ENCODE measurements at regions of chr10 and their contacts with region 1.

Region 1: GRCh38 chr10:117442944-117443685 is 67.9 kb upstream of the PDZD8 start:
- DNase-seq: peak; percentile 83
- ATAC-seq: peak; percentile 95
- H3K4me3 ChIP-seq: peak overlapping the region in 1 of 2 experiments; percentile 26; a peak in 2 of 4 replicates
- H3K27ac ChIP-seq: no peak overlapping the region
- H3K4me1 ChIP-seq: peaks cover 2 to 19% of the 10 kb centered on the region in 2 experiments; a peak in 2 of 4 replicates
- H3K27me3 ChIP-seq: no peaks in the 10 kb centered on the region; the same call in 1 of the 2 replicates
- CTCF ChIP-seq: peak; percentile 90 to 99 (median 99)
- POLR2A ChIP-seq: no peak
- RAD21 ChIP-seq: peak; percentile 89

Region 2: GRCh38 chr10:117226824-117227451 is 216.2 kb before region 1 on chr10:
- CTCF ChIA-PET with region 1: interaction called, 18 read pairs
- POLR2A ChIA-PET with region 1: no interaction called
- RAD21 ChIA-PET with region 1: no interaction called
- intact Hi-C with region 1: no loop called
- DNase-seq: peak; percentile 67
- ATAC-seq: peak; percentile 98
- H3K4me3 ChIP-seq: no peak overlapping the region
- H3K27ac ChIP-seq: no peak overlapping the region
- H3K4me1 ChIP-seq: peaks cover 0 to under 1% of the 10 kb centered on the region in 2 experiments; a peak in 1 of 4 replicates
- H3K27me3 ChIP-seq: peaks cover 28% of the 10 kb centered on the region; the same call in 1 of the 2 replicates
- CTCF ChIP-seq: peak; percentile 91 to 96 (median 91)
- POLR2A ChIP-seq: no peak
- RAD21 ChIP-seq: peak; percentile 91

Region 3: GRCh38 chr10:117353684-117354083 is 89.4 kb before region 1 on chr10:
- CTCF ChIA-PET with region 1: no interaction called
- POLR2A ChIA-PET with region 1: no interaction called
- RAD21 ChIA-PET with region 1: no interaction called
- intact Hi-C with region 1: no loop called
- DNase-seq: no peak
- ATAC-seq: no peak
- H3K4me3 ChIP-seq: no peak overlapping the region
- H3K27ac ChIP-seq: no peak overlapping the region
- H3K4me1 ChIP-seq: peaks cover 0 to 3% of the 10 kb centered on the region in 2 experiments; a peak in 1 of 4 replicates
- H3K27me3 ChIP-seq: no peaks in the 10 kb centered on the region
- CTCF ChIP-seq: no peak
- POLR2A ChIP-seq: no peak
- RAD21 ChIP-seq: no peak

Region 4: DNA sequence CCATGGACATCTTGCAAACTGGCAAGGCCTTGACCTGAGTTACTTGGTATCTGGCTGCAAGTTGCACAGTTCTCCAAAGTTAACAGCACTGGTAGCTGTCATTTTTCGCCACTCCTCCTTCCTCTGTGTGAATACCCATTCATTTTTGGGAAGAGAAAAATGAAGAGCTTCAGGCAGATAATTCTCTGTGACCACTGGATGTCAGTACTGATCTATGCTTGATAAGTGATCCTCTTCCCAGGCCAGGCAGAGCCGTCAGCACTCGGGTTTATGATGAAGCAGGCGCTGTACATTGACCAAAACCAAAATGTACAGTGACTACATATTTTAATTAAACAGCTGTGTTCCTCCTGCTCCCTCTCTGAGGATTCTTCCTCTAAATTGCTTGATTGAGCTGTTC is 12.0 kb before region 1 on chr10:
- CTCF ChIA-PET with region 1: interaction called, 92 read pairs
- POLR2A ChIA-PET with region 1: no interaction called
- RAD21 ChIA-PET with region 1: no interaction called
- intact Hi-C with region 1: no loop called
- DNase-seq: peak; percentile 28
- ATAC-seq: peak; percentile 58
- H3K4me3 ChIP-seq: no peak overlapping the region
- H3K27ac ChIP-seq: no peak overlapping the region
- H3K4me1 ChIP-seq: no peaks in the 10 kb centered on the region
- H3K27me3 ChIP-seq: peaks cover 18% of the 10 kb centered on the region; the same call in 1 of the 2 replicates
- CTCF ChIP-seq: peak in 2 of 3 experiments; percentile 34 to 37; a peak in 2 of 6 replicates
- POLR2A ChIP-seq: no peak
- RAD21 ChIP-seq: peak; percentile 58

Region 5: DNA sequence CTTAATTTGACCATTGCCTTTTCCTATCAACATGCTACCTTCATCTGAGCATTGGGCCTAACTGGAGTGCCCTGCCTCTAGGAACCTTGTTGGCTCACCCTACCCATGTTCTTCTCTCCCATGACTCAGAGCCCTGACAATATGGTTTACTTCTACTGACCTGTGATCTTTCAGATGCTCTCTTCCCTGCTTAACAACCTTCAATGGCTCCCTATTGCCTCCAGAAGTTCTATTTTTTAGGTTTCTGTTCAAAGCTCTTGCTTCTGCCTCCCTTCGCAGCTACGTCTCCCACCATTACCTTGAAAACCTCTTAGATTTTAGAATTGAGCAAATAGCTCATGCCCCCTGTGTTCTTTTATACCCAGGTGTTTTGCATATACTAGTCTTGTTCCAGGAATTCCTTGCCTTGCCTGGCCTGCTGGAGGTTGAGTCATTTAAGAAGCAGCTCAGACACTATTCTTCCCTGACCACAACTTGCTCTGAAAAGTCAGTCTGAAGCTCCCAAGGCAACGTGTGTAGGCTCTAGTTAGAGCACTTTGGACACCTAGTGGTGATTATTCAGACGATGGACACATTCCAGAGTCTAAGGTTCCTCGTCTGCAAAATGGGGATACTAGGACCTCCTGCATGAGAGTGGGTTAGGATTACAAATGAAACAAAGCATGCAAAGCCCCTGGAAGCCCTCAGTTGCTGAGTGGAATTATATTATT is 35.0 kb after region 1 on chr10:
- CTCF ChIA-PET with region 1: interaction called, 34 read pairs
- POLR2A ChIA-PET with region 1: no interaction called
- RAD21 ChIA-PET with region 1: interaction called, 3 to 6 read pairs
- intact Hi-C with region 1: loop called (anchors 1 kb)
- DNase-seq: peak; percentile 83
- ATAC-seq: peak; percentile 90
- H3K4me3 ChIP-seq: no peak overlapping the region
- H3K27ac ChIP-seq: no peak overlapping the region
- H3K4me1 ChIP-seq: peaks cover 0 to 10% of the 10 kb centered on the region in 2 experiments; a peak in 2 of 4 replicates
- H3K27me3 ChIP-seq: no peaks in the 10 kb centered on the region
- CTCF ChIP-seq: peak; percentile 55 to 81 (median 61)
- POLR2A ChIP-seq: no peak
- RAD21 ChIP-seq: peak; percentile 83

Region 6: GRCh38 chr10:118259288-118259906 is 816.3 kb after region 1 on chr10:
- CTCF ChIA-PET with region 1: interaction called, 10 read pairs
- POLR2A ChIA-PET with region 1: no interaction called
- RAD21 ChIA-PET with region 1: no interaction called
- intact Hi-C with region 1: no loop called
- DNase-seq: peak; percentile 32
- ATAC-seq: peak; percentile 98
- H3K4me3 ChIP-seq: no peak overlapping the region
- H3K27ac ChIP-seq: no peak overlapping the region
- H3K4me1 ChIP-seq: no peaks in the 10 kb centered on the region
- H3K27me3 ChIP-seq: peaks cover 54% of the 10 kb centered on the region
- CTCF ChIP-seq: peak; percentile 61 to 99 (median 92); a peak in 5 of 6 replicates
- POLR2A ChIP-seq: no peak
- RAD21 ChIP-seq: peak; percentile 70

Measured in HCT116 (cell line).